ENCODE measurements at regions of chr5 and their contacts with region 1.

Region 1: DNA sequence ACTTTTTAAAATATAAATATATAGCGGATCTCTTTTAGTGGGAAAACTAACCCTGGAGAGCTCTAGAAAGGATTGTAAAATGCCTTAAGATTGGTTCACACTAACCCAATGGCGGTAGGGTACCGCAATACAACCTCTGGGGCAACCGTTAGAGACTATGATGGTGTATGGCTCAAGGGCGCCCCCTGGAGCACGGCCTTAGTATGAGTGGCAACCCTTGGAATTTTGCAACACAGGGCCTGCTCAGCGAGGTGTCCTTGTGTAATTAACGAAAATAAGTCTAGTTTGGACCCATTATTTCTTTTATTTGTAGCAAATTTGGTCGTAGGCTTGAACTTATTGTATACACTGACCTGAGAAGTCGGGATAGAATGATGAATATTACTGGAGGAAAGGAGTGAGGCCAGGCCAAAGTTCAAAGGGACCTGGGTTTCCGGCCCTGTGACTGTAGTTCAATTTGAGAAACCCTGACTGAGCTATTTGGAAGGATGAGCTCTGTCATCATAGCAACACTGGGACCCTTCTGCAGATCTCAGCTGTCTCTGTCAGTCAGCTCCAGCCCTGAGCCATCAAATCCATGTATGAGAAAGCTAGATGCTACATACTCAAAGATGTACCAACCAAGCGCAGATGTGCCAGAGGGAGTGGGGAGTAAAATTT is 54.8 kb downstream of the CAMK4 start:
- DNase-seq: peak; percentile 77 to 94 (median 86)
- ATAC-seq: peak; percentile 99
- H3K4me3 ChIP-seq: no peak overlapping the region
- H3K4me3 Mint-ChIP-seq: no peak overlapping the region
- H3K27ac ChIP-seq: no peak overlapping the region
- H3K27ac Mint-ChIP-seq: peak overlapping the region; percentile 87
- H3K4me1 ChIP-seq: peaks cover 41% of the 10 kb centered on the region
- H3K4me1 Mint-ChIP-seq: peaks cover 79% of the 10 kb centered on the region
- H3K27me3 ChIP-seq: no peaks in the 10 kb centered on the region
- H3K27me3 Mint-ChIP-seq: no peaks in the 10 kb centered on the region
- CTCF ChIP-seq: peak; percentile 86

Region 2: GRCh38 chr5:110757118-110757729 is 521.8 kb before region 1 on chr5:
- CTCF ChIA-PET with region 1: no interaction called
- POLR2A ChIA-PET with region 1: no interaction called
- intact Hi-C with region 1: loop called (anchors 5 to 10 kb)
- DNase-seq: peak in 3 of 9 experiments; percentile 24 to 59 (median 51)
- ATAC-seq: peak; percentile 37
- H3K4me3 ChIP-seq: no peak overlapping the region
- H3K4me3 Mint-ChIP-seq: no peak overlapping the region
- H3K27ac ChIP-seq: no peak overlapping the region
- H3K27ac Mint-ChIP-seq: no peak overlapping the region
- H3K4me1 ChIP-seq: no peaks in the 10 kb centered on the region
- H3K4me1 Mint-ChIP-seq: peaks cover 17% of the 10 kb centered on the region
- H3K27me3 ChIP-seq: no peaks in the 10 kb centered on the region
- H3K27me3 Mint-ChIP-seq: no peaks in the 10 kb centered on the region
- CTCF ChIP-seq: peak; percentile 73

Region 3: GRCh38 chr5:111158105-111158744 is 120.8 kb before region 1 on chr5:
- CTCF ChIA-PET with region 1: interaction called, 203 read pairs
- POLR2A ChIA-PET with region 1: interaction called, 4 read pairs
- intact Hi-C with region 1: loop called (anchors 1 kb)
- DNase-seq: peak; percentile 59 to 87 (median 83)
- ATAC-seq: peak; percentile 99
- H3K4me3 ChIP-seq: no peak overlapping the region
- H3K4me3 Mint-ChIP-seq: no peak overlapping the region
- H3K27ac ChIP-seq: no peak overlapping the region
- H3K27ac Mint-ChIP-seq: no peak overlapping the region
- H3K4me1 ChIP-seq: no peaks in the 10 kb centered on the region
- H3K4me1 Mint-ChIP-seq: peaks cover 3% of the 10 kb centered on the region
- H3K27me3 ChIP-seq: no peaks in the 10 kb centered on the region
- H3K27me3 Mint-ChIP-seq: peaks cover 3% of the 10 kb centered on the region
- CTCF ChIP-seq: peak; percentile 100

Region 4: GRCh38 chr5:111197523-111197922 is 81.5 kb before region 1 on chr5:
- CTCF ChIA-PET with region 1: interaction called, 12 read pairs
- POLR2A ChIA-PET with region 1: no interaction called
- intact Hi-C with region 1: no loop called
- DNase-seq: no peak
- ATAC-seq: no peak
- H3K4me3 ChIP-seq: no peak overlapping the region
- H3K4me3 Mint-ChIP-seq: no peak overlapping the region
- H3K27ac ChIP-seq: no peak overlapping the region
- H3K27ac Mint-ChIP-seq: no peak overlapping the region
- H3K4me1 ChIP-seq: no peaks in the 10 kb centered on the region
- H3K4me1 Mint-ChIP-seq: peaks cover 4% of the 10 kb centered on the region
- H3K27me3 ChIP-seq: no peaks in the 10 kb centered on the region
- H3K27me3 Mint-ChIP-seq: peaks cover 3% of the 10 kb centered on the region
- CTCF ChIP-seq: no peak

Region 5: GRCh38 chr5:111229871-111230810 is 48.8 kb before region 1 on chr5:
- CTCF ChIA-PET with region 1: interaction called, 49 read pairs
- POLR2A ChIA-PET with region 1: interaction called, 23 read pairs
- intact Hi-C with region 1: loop called (anchors 2 kb)
- DNase-seq: peak in 2 of 9 experiments; percentile 67 to 83
- ATAC-seq: peak; percentile 36
- H3K4me3 ChIP-seq: peak overlapping the region; percentile 4 to 46
- H3K4me3 Mint-ChIP-seq: peak overlapping the region; percentile 79
- H3K27ac ChIP-seq: peak overlapping the region; percentile 31 to 72
- H3K27ac Mint-ChIP-seq: peak overlapping the region; percentile 99
- H3K4me1 ChIP-seq: peaks cover 75% of the 10 kb centered on the region
- H3K4me1 Mint-ChIP-seq: peaks cover 74% of the 10 kb centered on the region
- H3K27me3 ChIP-seq: no peaks in the 10 kb centered on the region
- H3K27me3 Mint-ChIP-seq: no peaks in the 10 kb centered on the region
- CTCF ChIP-seq: no peak

Region 6: DNA sequence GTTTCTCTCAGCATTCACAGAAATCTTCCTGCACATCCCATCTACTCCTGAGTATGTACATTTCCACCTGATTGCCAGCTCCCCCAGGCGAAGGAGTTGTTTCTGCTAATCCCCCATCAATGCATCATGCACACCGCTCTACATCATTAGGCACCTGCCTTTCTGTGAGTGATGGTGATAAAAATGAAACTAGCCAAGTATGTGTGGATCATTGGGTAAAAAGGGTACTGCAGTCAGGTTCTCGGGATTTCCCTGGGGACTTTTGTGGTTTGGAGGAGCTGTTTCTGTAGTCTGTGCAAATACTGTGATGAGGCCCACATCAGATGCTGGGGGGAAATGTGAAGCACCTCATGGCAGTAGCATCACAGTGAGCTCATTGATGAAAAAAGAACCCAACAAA is 24.4 kb before region 1 on chr5:
- CTCF ChIA-PET with region 1: interaction called, 23 read pairs
- POLR2A ChIA-PET with region 1: interaction called, 6 read pairs
- intact Hi-C with region 1: no loop called
- DNase-seq: peak in 6 of 9 experiments; percentile 19 to 93 (median 69)
- ATAC-seq: peak; percentile 86
- H3K4me3 ChIP-seq: no peak overlapping the region
- H3K4me3 Mint-ChIP-seq: peak overlapping the region; percentile 60
- H3K27ac ChIP-seq: peak overlapping the region; percentile 14 to 62
- H3K27ac Mint-ChIP-seq: peak overlapping the region; percentile 90
- H3K4me1 ChIP-seq: peaks cover 68% of the 10 kb centered on the region
- H3K4me1 Mint-ChIP-seq: peaks cover 79% of the 10 kb centered on the region
- H3K27me3 ChIP-seq: no peaks in the 10 kb centered on the region
- H3K27me3 Mint-ChIP-seq: no peaks in the 10 kb centered on the region
- CTCF ChIP-seq: no peak

Region 7: GRCh38 chr5:111299067-111299481 is 20.1 kb after region 1 on chr5:
- CTCF ChIA-PET with region 1: interaction called, 19 read pairs
- POLR2A ChIA-PET with region 1: no interaction called
- intact Hi-C with region 1: no loop called
- DNase-seq: no peak
- ATAC-seq: no peak
- H3K4me3 ChIP-seq: no peak overlapping the region
- H3K4me3 Mint-ChIP-seq: no peak overlapping the region
- H3K27ac ChIP-seq: no peak overlapping the region
- H3K27ac Mint-ChIP-seq: no peak overlapping the region
- H3K4me1 ChIP-seq: no peaks in the 10 kb centered on the region
- H3K4me1 Mint-ChIP-seq: peaks cover 48% of the 10 kb centered on the region
- H3K27me3 ChIP-seq: no peaks in the 10 kb centered on the region
- H3K27me3 Mint-ChIP-seq: no peaks in the 10 kb centered on the region
- CTCF ChIP-seq: no peak

Measured in CD8-positive, alpha-beta T cell (primary cell).